ENCODE measurements at regions of chr6 and their contacts with region 1.

Region 1: GRCh38 chr6:37018198-37019064 is 13.0 kb downstream of the FGD2 start:
- DNase-seq: peak; percentile 77 to 93
- H3K4me3 ChIP-seq: no peak overlapping the region
- H3K27ac ChIP-seq: no peak overlapping the region
- H3K4me1 ChIP-seq: peaks cover 0 to 5% (median 3%) of the 10 kb centered on the region in 4 experiments; a peak in 5 of 7 replicates
- H3K27me3 ChIP-seq: no peaks in the 10 kb centered on the region
- CTCF ChIP-seq: peak; percentile 97 to 100 (median 97)
- EP300 ChIP-seq: no peak
- POLR2A ChIP-seq: no peak
- RAD21 ChIP-seq: peak; percentile 97

Region 2: DNA sequence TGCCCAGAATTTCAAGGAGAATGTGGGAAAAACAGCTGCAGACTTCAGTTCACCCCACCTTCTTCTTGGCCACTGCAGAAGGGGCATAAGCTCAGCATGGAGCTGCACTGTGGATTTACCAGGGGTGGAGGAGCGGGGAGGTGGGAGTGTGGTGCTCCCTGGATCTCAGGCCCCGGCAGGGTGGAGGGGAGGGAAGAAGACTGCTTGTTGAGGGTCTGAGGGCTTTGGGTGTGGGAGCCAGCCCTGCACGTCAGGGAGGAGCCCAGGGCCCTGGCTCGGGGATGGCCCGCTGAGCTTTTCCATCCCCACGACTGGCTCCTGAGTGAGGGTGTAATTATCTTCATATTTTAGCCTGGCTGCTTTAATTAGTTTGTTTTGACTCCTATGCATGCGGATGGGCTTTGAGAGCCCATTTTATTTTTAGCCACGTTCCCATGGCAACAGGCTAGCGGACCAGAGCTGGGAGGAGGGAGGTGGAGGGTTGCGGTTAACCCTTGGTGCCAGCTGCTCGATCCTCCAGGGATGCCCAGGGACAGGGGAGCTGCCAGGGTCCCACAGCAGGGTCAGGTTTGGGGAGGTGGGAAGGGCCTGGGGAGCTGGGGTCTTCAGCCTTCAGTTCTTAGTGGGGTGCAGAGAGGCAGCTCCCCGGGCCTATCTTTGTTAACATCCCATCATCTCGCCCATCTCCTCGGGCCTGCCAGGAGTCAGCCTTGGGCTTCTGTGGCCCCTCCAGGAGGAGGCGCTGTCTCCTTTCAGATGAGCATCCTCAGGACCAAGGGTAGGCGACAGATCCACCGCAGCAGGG is 252.6 kb before region 1 on chr6:
- CTCF ChIA-PET with region 1: interaction called, 87 read pairs
- POLR2A ChIA-PET with region 1: no interaction called
- DNase-seq: peak; percentile 61 to 95
- H3K4me3 ChIP-seq: no peak overlapping the region
- H3K27ac ChIP-seq: no peak overlapping the region
- H3K4me1 ChIP-seq: peaks cover 0 to 10% (median 1%) of the 10 kb centered on the region in 4 experiments; a peak in 4 of 7 replicates
- H3K27me3 ChIP-seq: no peaks in the 10 kb centered on the region
- CTCF ChIP-seq: peak; percentile 94 to 97 (median 96)
- EP300 ChIP-seq: no peak
- POLR2A ChIP-seq: no peak
- RAD21 ChIP-seq: peak; percentile 98 to 99

Region 3: GRCh38 chr6:36893976-36894932 is 124.2 kb before region 1 on chr6:
- CTCF ChIA-PET with region 1: interaction called, 12 read pairs
- POLR2A ChIA-PET with region 1: no interaction called
- DNase-seq: no peak
- H3K4me3 ChIP-seq: no peak overlapping the region
- H3K27ac ChIP-seq: no peak overlapping the region
- H3K4me1 ChIP-seq: no peaks in the 10 kb centered on the region
- H3K27me3 ChIP-seq: no peaks in the 10 kb centered on the region
- CTCF ChIP-seq: no peak
- EP300 ChIP-seq: no peak
- POLR2A ChIP-seq: no peak
- RAD21 ChIP-seq: no peak

Region 4: DNA sequence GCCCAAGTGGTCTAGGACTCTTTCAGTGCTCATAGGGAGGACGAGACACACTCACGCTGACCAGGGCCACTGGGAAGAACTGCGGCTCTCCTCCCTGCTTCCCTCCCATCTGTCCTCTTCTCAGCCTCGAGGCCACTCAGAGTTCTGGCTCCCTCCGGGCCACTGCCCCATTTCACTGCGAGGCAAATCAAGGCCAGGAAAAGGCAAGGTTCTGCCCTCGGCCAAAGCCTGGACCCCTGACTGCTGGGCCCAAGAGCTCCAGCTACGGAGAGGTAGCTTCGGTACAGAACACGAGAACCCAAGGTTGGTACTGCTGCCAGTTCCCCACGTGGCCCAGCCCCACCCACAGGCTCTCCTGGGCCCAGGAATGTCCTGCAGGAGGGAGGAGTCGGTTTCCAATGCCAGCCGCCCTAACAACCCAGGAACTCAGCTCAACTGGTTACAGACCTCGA is 49.2 kb before region 1 on chr6:
- CTCF ChIA-PET with region 1: interaction called, 237 read pairs
- POLR2A ChIA-PET with region 1: no interaction called
- DNase-seq: no peak
- H3K4me3 ChIP-seq: no peak overlapping the region
- H3K27ac ChIP-seq: no peak overlapping the region
- H3K4me1 ChIP-seq: no peaks in the 10 kb centered on the region
- H3K27me3 ChIP-seq: no peaks in the 10 kb centered on the region
- CTCF ChIP-seq: no peak
- EP300 ChIP-seq: no peak
- POLR2A ChIP-seq: no peak
- RAD21 ChIP-seq: no peak

Region 5: DNA sequence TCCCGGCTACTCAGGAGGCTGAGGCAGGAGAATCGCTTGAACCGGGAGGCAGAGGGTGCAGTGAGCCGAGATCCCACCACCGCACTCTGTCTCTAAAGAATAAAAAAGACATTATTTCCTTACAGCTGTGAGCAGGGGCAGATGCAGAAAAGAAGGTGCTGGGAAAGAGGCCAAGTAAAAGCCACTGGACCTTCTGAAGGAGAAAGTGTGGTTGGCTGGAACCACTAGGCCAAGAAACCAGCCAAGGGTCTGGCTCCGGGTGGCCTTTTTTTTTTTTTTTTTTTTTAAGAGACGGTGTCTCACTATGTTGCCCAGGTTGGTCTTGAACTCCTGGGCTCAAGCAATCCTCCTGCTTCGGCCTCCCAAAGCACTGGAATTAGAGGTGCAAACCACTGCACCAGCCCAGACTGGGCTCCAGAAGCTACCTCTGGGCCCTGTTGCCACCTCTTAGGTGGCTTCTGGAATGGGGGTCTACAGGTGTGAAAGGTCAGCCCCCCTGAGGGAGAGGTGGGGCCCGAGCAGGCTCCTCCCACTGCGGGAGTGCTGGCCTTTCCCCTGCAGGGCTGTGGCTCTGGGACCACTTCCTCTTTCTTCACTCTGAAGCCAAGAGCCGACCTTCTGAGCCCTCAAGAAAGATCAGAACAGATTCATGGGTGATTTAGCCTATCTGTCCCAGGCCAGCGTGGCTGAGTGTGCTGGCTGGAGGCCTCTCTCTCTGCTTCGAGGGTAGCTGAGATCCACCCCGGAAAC is 13.2 kb before region 1 on chr6 and contains the start of gene FGD2:
- CTCF ChIA-PET with region 1: interaction called, 74 read pairs
- POLR2A ChIA-PET with region 1: interaction called, 6 read pairs
- DNase-seq: no peak
- H3K4me3 ChIP-seq: no peak within 1 kb of the TSS
- H3K27ac ChIP-seq: no peak within 1 kb of the TSS; the same call in 1 of the 2 replicates
- H3K4me1 ChIP-seq: no peaks in the 10 kb centered on the region
- H3K27me3 ChIP-seq: no peaks in the 10 kb centered on the region
- CTCF ChIP-seq: no peak
- EP300 ChIP-seq: no peak
- POLR2A ChIP-seq: no peak
- RAD21 ChIP-seq: no peak
- total RNA-seq, gene FGD2: 0.19 and 0.32 TPM in 2 replicates

Region 6: DNA sequence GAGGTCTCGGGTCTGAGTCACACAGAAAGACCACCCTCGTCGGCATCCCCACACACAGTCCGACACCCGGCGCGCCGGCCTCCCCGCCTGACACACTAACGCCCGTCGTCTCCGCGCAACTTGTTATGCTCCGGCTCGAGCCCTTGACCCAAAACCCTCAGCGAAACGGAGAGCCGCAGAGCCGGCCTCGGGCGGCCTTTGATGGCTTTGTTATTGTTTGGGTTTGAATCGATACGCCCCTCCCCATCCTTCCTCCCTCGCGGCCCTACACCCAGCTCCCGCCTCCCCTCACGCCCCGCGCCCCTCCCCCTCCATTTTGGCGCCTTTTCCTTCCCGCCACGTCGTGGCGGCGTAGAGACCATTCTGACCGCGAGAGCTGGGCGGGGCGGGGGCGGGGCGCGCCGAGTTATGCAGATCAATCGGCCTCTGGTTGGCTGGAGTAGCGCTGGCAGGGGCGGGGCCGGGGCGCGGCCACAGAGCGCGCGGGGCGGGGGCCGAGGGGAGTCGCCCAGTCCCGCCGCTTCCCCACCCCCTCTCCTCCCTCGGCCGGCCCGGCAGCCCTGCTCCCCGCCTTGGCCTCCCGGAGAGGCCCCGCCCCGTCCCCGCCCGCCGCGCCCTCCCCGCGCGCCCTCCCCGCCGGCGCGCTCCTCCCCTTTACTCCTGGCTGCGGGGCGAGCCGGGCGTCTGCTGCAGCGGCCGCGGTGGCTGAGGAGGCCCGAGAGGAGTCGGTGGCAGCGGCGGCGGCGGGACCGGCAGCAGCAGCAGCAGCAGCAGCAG is 151.3 kb after region 1 on chr6 and contains the start of gene PIM1:
- CTCF ChIA-PET with region 1: interaction called, 192 read pairs
- POLR2A ChIA-PET with region 1: interaction called, 3 read pairs
- DNase-seq: peak; percentile 92 to 93
- H3K4me3 ChIP-seq: peak within 1 kb of the TSS; percentile 92 to 99 (median 94)
- H3K27ac ChIP-seq: peak within 1 kb of the TSS; percentile 97
- H3K4me1 ChIP-seq: peaks cover 6 to 14% (median 10%) of the 10 kb centered on the region in 4 experiments; a peak in 5 of 7 replicates
- H3K27me3 ChIP-seq: no peaks in the 10 kb centered on the region
- CTCF ChIP-seq: no peak
- EP300 ChIP-seq: peak in 1 of 2 experiments; percentile 54; a peak in 1 of 3 replicates
- POLR2A ChIP-seq: peak in 1 of 2 experiments; percentile 65
- RAD21 ChIP-seq: no peak
- total RNA-seq, gene PIM1: 94.1 and 94.9 TPM in 2 replicates

Measured in H1 (cell line).